ENCODE measurements at regions of chr11 and their contacts with region 1.

Region 1: GRCh38 chr11:66616379-66617154 is at the start of gene RBM14:
- DNase-seq: peak; percentile 100
- ATAC-seq: peak; percentile 94
- H3K4me3 ChIP-seq: peak within 1 kb of the TSS; percentile 89
- H3K27ac ChIP-seq: peak within 1 kb of the TSS; percentile 77
- H3K4me1 ChIP-seq: peaks cover 34% of the 10 kb centered on the region
- H3K27me3 ChIP-seq: no peaks in the 10 kb centered on the region
- CTCF ChIP-seq: no peak
- total RNA-seq, gene RBM14: 79.3 and 119 TPM in 2 replicates

Region 2: GRCh38 chr11:66371627-66372415 is 244.7 kb before region 1 on chr11 and contains the start of gene SLC29A2:
- CTCF ChIA-PET with region 1: no interaction called
- POLR2A ChIA-PET with region 1: interaction called, 16 read pairs
- intact Hi-C with region 1: no loop called
- DNase-seq: peak; percentile 96
- ATAC-seq: peak; percentile 79
- H3K4me3 ChIP-seq: peak within 1 kb of the TSS; percentile 89
- H3K27ac ChIP-seq: peak within 1 kb of the TSS; percentile 63
- H3K4me1 ChIP-seq: peaks cover 25% of the 10 kb centered on the region
- H3K27me3 ChIP-seq: no peaks in the 10 kb centered on the region
- CTCF ChIP-seq: no peak
- total RNA-seq, gene SLC29A2: 25.5 and 27.8 TPM in 2 replicates

Region 3: GRCh38 chr11:66545701-66546367 is 70.7 kb before region 1 on chr11 and contains the start of gene ZDHHC24:
- CTCF ChIA-PET with region 1: no interaction called
- POLR2A ChIA-PET with region 1: interaction called, 6 read pairs
- intact Hi-C with region 1: loop called (anchors 2 kb)
- DNase-seq: peak; percentile 99
- ATAC-seq: peak; percentile 96
- H3K4me3 ChIP-seq: peak within 1 kb of the TSS; percentile 89
- H3K27ac ChIP-seq: 0 out of 2 replicates have a peak within 1 kb of the TSS, but pooled peaks have one; percentile 10
- H3K4me1 ChIP-seq: peaks cover 21% of the 10 kb centered on the region
- H3K27me3 ChIP-seq: no peaks in the 10 kb centered on the region
- CTCF ChIP-seq: no peak
- total RNA-seq, gene ZDHHC24: 15.1 and 19.7 TPM in 2 replicates

Region 4: GRCh38 chr11:66638177-66639065 is 21.9 kb after region 1 on chr11 and contains the start of gene RBM4:
- CTCF ChIA-PET with region 1: no interaction called
- POLR2A ChIA-PET with region 1: interaction called, 20 read pairs
- intact Hi-C with region 1: loop called (anchors 2 kb)
- DNase-seq: peak; percentile 100
- ATAC-seq: peak; percentile 93
- H3K4me3 ChIP-seq: peak within 1 kb of the TSS; percentile 95
- H3K27ac ChIP-seq: peak within 1 kb of the TSS; percentile 73
- H3K4me1 ChIP-seq: peaks cover 43% of the 10 kb centered on the region
- H3K27me3 ChIP-seq: no peaks in the 10 kb centered on the region
- CTCF ChIP-seq: no peak; the same call in 1 of the 2 replicates
- total RNA-seq, gene RBM4: 152 and 164 TPM in 2 replicates

Region 5: GRCh38 chr11:66749070-66749469 is 132.5 kb after region 1 on chr11:
- CTCF ChIA-PET with region 1: no interaction called
- POLR2A ChIA-PET with region 1: no interaction called
- intact Hi-C with region 1: no loop called
- DNase-seq: peak; percentile 98
- ATAC-seq: peak; percentile 14
- H3K4me3 ChIP-seq: peak overlapping the region; percentile 38
- H3K27ac ChIP-seq: peak overlapping the region; percentile 55
- H3K4me1 ChIP-seq: peaks cover 27% of the 10 kb centered on the region
- H3K27me3 ChIP-seq: no peaks in the 10 kb centered on the region
- CTCF ChIP-seq: no peak

Measured in PC-3 (cell line).